ENCODE measurements at regions of chr18 and their contacts with region 1.

Region 1: GRCh38 chr18:48600456-48601090 is 61.7 kb downstream of the CTIF start:
- DNase-seq: no peak
- H3K4me3 ChIP-seq: no peak overlapping the region
- H3K27ac ChIP-seq: no peak overlapping the region
- H3K4me1 ChIP-seq: no peaks in the 10 kb centered on the region
- H3K27me3 ChIP-seq: no peaks in the 10 kb centered on the region
- CTCF ChIP-seq: no peak
- POLR2A ChIP-seq: no peak

Region 2: GRCh38 chr18:48749768-48750167 is 149.2 kb after region 1 on chr18:
- intact Hi-C with region 1: loop called (anchors 5 kb)
- DNase-seq: peak; percentile 61 to 83
- H3K4me3 ChIP-seq: no peak overlapping the region
- H3K27ac ChIP-seq: peak overlapping the region; percentile 38 to 77
- H3K4me1 ChIP-seq: peaks cover 0 to 6% of the 10 kb centered on the region in 2 donors
- H3K27me3 ChIP-seq: no peaks in the 10 kb centered on the region
- CTCF ChIP-seq: peak in 1 of 4 experiments; percentile 12
- POLR2A ChIP-seq: no peak

Measured in uterus (tissue), 4 donors.